ENCODE measurements at regions of chrX and their contacts with region 1.

Region 1: GRCh38 chrX:118164138-118164537 is 47.5 kb upstream of the KLHL13 start:
- DNase-seq: no peak
- H3K4me3 ChIP-seq: no peak overlapping the region
- H3K27ac ChIP-seq: no peak overlapping the region
- H3K4me1 ChIP-seq: no peaks in the 10 kb centered on the region
- H3K27me3 ChIP-seq: no peaks in the 10 kb centered on the region
- CTCF ChIP-seq: no peak
- POLR2A ChIP-seq: no peak

Region 2: GRCh38 chrX:117002981-117003380 is 1161.2 kb before region 1 on chrX:
- intact Hi-C with region 1: loop called (anchors 10 kb)
- DNase-seq: no peak
- H3K4me3 ChIP-seq: no peak overlapping the region
- H3K27ac ChIP-seq: no peak overlapping the region
- H3K4me1 ChIP-seq: no peaks in the 10 kb centered on the region
- H3K27me3 ChIP-seq: no peaks in the 10 kb centered on the region
- CTCF ChIP-seq: no peak
- POLR2A ChIP-seq: no peak

Measured in vagina (tissue), 2 donors.